Activated CD8-positive, alpha-beta memory T cell treated with anti-CD3 and anti-CD28 coated beads, Interleukin-2, amount 10 ng/mL, durations not matched to agents 7 days and 5 days (primary cell): ENCODE measurements at regions of chr17 and their contacts with region 1.

Region 1: GRCh38 chr17:1331708-1332107 is 52.2 kb downstream of the TRARG1 start:
- DNase-seq: peak; percentile 50
- ATAC-seq: peak; percentile 46
- H3K4me3 Mint-ChIP-seq: no peak overlapping the region
- H3K27ac Mint-ChIP-seq: no peak overlapping the region
- H3K4me1 Mint-ChIP-seq: peaks cover 10% of the 10 kb centered on the region
- H3K27me3 Mint-ChIP-seq: peaks cover 4% of the 10 kb centered on the region

Region 2: GRCh38 chr17:1260086-1260769 is 71.5 kb before region 1 on chr17:
- CTCF ChIA-PET with region 1: interaction called, 47 read pairs
- DNase-seq: no peak
- ATAC-seq: no peak
- H3K4me3 Mint-ChIP-seq: no peak overlapping the region
- H3K27ac Mint-ChIP-seq: no peak overlapping the region
- H3K4me1 Mint-ChIP-seq: peaks cover 42% of the 10 kb centered on the region
- H3K27me3 Mint-ChIP-seq: peaks cover 26% of the 10 kb centered on the region

Region 3: GRCh38 chr17:1267471-1267947 is 64.2 kb before region 1 on chr17:
- CTCF ChIA-PET with region 1: interaction called, 17 read pairs
- DNase-seq: no peak
- ATAC-seq: no peak
- H3K4me3 Mint-ChIP-seq: peak overlapping the region; percentile 78
- H3K27ac Mint-ChIP-seq: peak overlapping the region; percentile 68
- H3K4me1 Mint-ChIP-seq: peaks cover 7% of the 10 kb centered on the region
- H3K27me3 Mint-ChIP-seq: peaks cover 32% of the 10 kb centered on the region

Region 4: DNA sequence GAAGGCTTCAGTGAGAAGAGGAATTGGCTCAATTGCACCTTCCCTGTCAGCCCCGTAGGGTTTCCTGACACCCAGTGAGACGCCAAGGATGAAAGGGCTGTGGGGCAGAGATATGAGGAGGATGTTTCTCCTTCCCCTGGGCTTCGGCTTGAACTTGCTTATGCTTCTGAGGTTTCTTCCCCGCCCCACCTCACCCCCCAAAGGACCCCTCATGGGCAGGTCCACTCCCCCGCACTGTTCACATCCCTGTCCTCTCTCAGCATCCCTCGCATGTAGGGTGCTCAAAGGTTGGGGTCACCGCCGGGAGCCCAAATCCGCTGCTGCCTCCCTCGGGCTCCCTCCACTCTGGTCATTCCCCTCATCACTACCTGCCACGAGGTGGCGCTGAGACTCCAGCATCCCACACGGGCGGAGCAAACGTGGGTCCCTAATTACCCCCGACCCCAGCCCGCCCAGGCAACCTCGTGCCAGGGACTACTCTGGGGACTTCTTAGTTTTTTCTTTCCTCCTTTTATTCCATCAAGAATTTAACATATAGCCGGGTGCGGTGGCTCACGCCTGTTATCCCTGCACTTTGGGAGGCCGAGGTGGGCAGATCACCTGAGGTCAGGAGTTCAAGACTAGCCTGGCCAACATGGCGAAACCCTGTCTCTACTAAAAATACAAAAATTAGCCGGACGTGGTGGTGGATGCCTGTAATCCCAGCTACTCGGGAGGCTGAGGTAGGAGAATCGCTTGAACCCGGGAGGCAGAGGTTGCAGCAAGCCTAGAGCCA is 55.6 kb before region 1 on chr17:
- CTCF ChIA-PET with region 1: interaction called, 25 read pairs
- DNase-seq: peak; percentile 79
- ATAC-seq: peak; percentile 92
- H3K4me3 Mint-ChIP-seq: peak overlapping the region; percentile 2
- H3K27ac Mint-ChIP-seq: no peak overlapping the region
- H3K4me1 Mint-ChIP-seq: peaks cover 5% of the 10 kb centered on the region
- H3K27me3 Mint-ChIP-seq: peaks cover 33% of the 10 kb centered on the region

Region 5: DNA sequence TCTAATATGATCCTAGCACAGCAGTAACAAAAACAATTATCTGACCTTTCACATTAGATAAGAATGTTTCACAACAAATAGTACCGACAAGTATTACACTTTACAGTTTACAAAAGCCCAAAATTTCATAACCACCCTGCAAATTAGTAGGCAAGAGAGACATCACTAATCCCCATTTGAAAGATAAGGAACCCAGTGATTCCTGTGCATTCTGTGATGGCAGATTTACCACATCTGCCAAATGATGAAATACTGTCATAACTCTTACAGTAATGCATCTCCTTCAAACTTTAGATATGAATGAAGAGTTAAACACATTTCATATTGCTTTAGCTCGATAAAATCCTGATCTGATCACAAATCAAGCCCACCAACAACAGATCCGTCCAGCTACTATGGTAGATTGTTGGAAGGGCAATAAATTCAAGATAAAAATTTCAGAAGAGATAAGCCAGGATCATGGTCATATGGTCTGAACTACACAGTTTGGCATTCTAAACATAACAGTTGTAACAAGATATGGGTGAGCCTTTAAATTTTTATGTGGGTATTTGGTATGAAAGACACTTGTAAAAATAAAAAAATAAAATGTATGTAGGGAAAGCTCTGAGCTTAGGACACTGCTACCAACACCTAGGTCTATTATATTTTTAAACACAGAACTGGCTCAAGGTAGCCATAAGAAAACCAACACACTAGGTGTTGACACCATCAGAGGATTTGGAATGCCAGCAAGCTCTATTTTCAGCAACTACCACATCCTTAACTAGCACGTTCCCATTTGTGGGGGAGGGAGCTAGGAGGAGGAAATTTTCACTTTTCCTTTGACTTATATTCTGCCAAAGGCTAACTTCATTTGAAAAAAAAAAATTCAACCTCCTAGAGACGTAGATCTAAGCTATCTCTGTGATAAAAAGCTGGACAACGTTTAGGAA is 59.0 kb after region 1 on chr17:
- CTCF ChIA-PET with region 1: no interaction called
- DNase-seq: no peak
- ATAC-seq: no peak
- H3K4me3 Mint-ChIP-seq: no peak overlapping the region
- H3K27ac Mint-ChIP-seq: peak overlapping the region; percentile 50
- H3K4me1 Mint-ChIP-seq: peaks cover 63% of the 10 kb centered on the region
- H3K27me3 Mint-ChIP-seq: no peaks in the 10 kb centered on the region

Region 6: DNA sequence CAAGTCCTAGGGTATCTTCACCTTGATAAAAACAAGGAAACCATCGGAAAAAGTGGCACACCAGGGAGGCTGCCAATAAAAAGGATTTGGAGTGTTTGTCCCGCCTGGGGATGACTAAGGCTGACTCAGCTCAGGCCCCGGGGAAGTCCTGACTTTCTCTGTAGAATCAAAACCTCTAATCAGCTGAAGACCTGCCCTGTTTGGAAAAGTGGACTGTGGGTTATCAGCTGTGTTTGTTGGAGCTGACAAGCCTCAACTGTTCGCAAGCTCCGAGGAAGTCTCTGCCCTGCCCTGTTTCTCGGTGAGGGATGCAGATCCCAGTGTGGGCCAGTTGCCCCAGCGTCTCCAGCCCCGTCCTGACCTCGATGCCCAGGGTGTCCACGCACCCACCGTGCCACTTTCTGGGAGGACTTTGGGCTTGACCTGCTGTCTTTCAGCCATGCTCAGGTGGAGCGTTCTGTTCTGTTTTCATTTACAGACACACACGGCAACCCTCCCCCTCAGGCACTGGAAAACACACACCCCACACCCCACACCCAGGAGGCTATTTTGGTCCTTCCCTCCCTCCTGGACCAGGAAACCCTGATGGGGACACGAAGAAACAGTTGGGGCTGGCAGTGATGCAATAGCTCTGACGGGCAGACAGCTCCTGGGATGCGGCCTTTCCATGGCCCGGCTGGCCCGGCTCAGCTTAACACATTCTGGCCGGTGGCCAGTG is 258.5 kb after region 1 on chr17:
- CTCF ChIA-PET with region 1: no interaction called
- DNase-seq: no peak
- ATAC-seq: no peak
- H3K4me3 Mint-ChIP-seq: no peak overlapping the region
- H3K27ac Mint-ChIP-seq: no peak overlapping the region
- H3K4me1 Mint-ChIP-seq: peaks cover 5% of the 10 kb centered on the region
- H3K27me3 Mint-ChIP-seq: no peaks in the 10 kb centered on the region